AG04449 (cell line): ENCODE measurements at regions of chr12 and their contacts with region 1.

Region 1: GRCh38 chr12:10153271-10154144 is 18.4 kb downstream of the OLR1 start:
- DNase-seq: no peak
- H3K4me3 ChIP-seq: peak overlapping the region; percentile 58
- CTCF ChIP-seq: peak; percentile 60

Region 2: DNA sequence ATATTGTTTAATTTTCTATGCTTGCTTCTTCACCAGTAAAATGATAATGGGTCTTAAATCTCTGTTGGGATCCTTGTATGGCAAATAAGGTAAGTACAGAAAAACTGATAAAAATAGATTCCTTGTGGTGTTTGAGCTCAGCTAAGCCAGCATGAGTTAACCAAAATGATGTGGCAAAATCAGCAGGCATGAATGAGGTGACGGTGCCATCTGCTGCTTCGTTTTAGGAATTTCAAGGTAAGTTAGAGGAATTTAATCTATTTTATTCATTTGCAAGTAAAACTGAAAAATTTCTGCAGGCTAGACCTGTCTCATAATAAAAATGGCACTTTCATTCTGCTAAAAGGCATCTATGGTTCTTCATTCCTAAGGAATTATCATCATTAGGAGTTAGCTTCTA is 13.5 kb before region 1 on chr12:
- CTCF ChIA-PET with region 1: interaction called, 26 read pairs
- POLR2A ChIA-PET with region 1: no interaction called
- DNase-seq: no peak
- H3K4me3 ChIP-seq: no peak overlapping the region
- CTCF ChIP-seq: peak; percentile 39

Region 3: GRCh38 chr12:10182354-10183061 is 29.0 kb after region 1 on chr12:
- CTCF ChIA-PET with region 1: interaction called, 18 read pairs
- POLR2A ChIA-PET with region 1: no interaction called
- DNase-seq: peak; percentile 84
- H3K4me3 ChIP-seq: no peak overlapping the region
- CTCF ChIP-seq: no peak

Region 4: GRCh38 chr12:10196210-10196609 is 42.7 kb after region 1 on chr12:
- CTCF ChIA-PET with region 1: interaction called, 59 read pairs
- POLR2A ChIA-PET with region 1: no interaction called
- DNase-seq: no peak
- H3K4me3 ChIP-seq: no peak overlapping the region
- CTCF ChIP-seq: no peak

Region 5: GRCh38 chr12:10212201-10213131 is 59.0 kb after region 1 on chr12 and contains the start of gene GABARAPL1:
- CTCF ChIA-PET with region 1: interaction called, 21 read pairs
- POLR2A ChIA-PET with region 1: interaction called, 4 read pairs
- DNase-seq: peak; percentile 98
- H3K4me3 ChIP-seq: peak within 1 kb of the TSS; percentile 92
- CTCF ChIP-seq: no peak

Region 6: GRCh38 chr12:10268037-10268436 is 114.5 kb after region 1 on chr12:
- CTCF ChIA-PET with region 1: no interaction called
- POLR2A ChIA-PET with region 1: no interaction called
- DNase-seq: no peak
- H3K4me3 ChIP-seq: no peak overlapping the region
- CTCF ChIP-seq: no peak